Dendritic cell treated with granulocyte-macrophage colony-stimulating factor and Interleukin-4, amounts not matched to agents 40 ng/mL and 50 ng/mL, for 4 days (primary cell): ENCODE measurements at regions of chrX and their contacts with region 1.

Region 1: GRCh38 chrX:120536061-120536460 is 24.7 kb downstream of the CUL4B start:
- H3K4me3 Mint-ChIP-seq: no peak overlapping the region
- H3K27ac Mint-ChIP-seq: peak overlapping the region; percentile 37
- H3K4me1 Mint-ChIP-seq: peaks cover 20% of the 10 kb centered on the region
- H3K27me3 Mint-ChIP-seq: no peaks in the 10 kb centered on the region

Region 2: DNA sequence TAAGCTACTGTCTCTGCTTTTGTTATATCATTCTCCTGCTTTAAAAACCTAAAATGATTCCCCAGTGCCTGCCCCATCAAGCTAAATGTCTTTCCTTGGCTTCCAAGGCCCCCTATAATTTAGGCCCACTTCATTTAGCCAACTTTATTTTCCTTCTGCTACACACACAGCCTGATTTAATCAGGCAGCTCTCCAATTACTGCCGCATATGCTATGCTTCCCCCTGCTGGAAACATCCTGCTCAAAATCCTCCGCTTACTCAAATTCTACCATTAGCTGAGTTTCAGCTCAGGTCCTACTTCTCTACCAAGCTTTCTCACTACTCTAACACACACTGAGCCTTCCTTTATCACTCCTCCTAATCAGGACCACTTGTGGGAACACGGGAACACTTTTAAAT is 83.9 kb before region 1 on chrX:
- intact Hi-C with region 1: no loop called
- H3K4me3 Mint-ChIP-seq: no peak overlapping the region
- H3K27ac Mint-ChIP-seq: peak overlapping the region; percentile 26
- H3K4me1 Mint-ChIP-seq: peaks cover 11% of the 10 kb centered on the region
- H3K27me3 Mint-ChIP-seq: no peaks in the 10 kb centered on the region

Region 3: GRCh38 chrX:120629667-120630537 is 93.8 kb after region 1 on chrX and contains the start of gene C1GALT1C1:
- intact Hi-C with region 1: loop called (anchors 10 kb)
- H3K4me3 Mint-ChIP-seq: peak within 1 kb of the TSS; percentile 94
- H3K27ac Mint-ChIP-seq: peak within 1 kb of the TSS; percentile 94
- H3K4me1 Mint-ChIP-seq: no peaks in the 10 kb centered on the region
- H3K27me3 Mint-ChIP-seq: no peaks in the 10 kb centered on the region